ENCODE measurements at regions of chr2 and their contacts with region 1.

Region 1: GRCh38 chr2:177397481-177398289 is 5.1 kb downstream of the AGPS start:
- DNase-seq: peak; percentile 86
- ATAC-seq: peak; percentile 53
- H3K4me3 ChIP-seq: peak overlapping the region; percentile 54
- H3K27ac ChIP-seq: peak overlapping the region; percentile 99
- H3K4me1 ChIP-seq: peaks cover 61% of the 10 kb centered on the region
- H3K27me3 ChIP-seq: no peaks in the 10 kb centered on the region
- CTCF ChIP-seq: no peak

Region 2: GRCh38 chr2:177338177-177338721 is 59.4 kb before region 1 on chr2:
- CTCF ChIA-PET with region 1: interaction called, 10 read pairs
- POLR2A ChIA-PET with region 1: no interaction called
- intact Hi-C with region 1: loop called (anchors 1 kb)
- DNase-seq: peak; percentile 88
- ATAC-seq: peak; percentile 89
- H3K4me3 ChIP-seq: no peak overlapping the region; the same call in 1 of the 2 replicates
- H3K27ac ChIP-seq: peak overlapping the region; percentile 60
- H3K4me1 ChIP-seq: peaks cover 24% of the 10 kb centered on the region
- H3K27me3 ChIP-seq: no peaks in the 10 kb centered on the region
- CTCF ChIP-seq: no peak

Region 3: GRCh38 chr2:177355874-177356273 is 41.8 kb before region 1 on chr2:
- CTCF ChIA-PET with region 1: no interaction called
- POLR2A ChIA-PET with region 1: no interaction called
- intact Hi-C with region 1: loop called (anchors 2 kb)
- DNase-seq: no peak
- ATAC-seq: no peak
- H3K4me3 ChIP-seq: no peak overlapping the region
- H3K27ac ChIP-seq: no peak overlapping the region
- H3K4me1 ChIP-seq: no peaks in the 10 kb centered on the region
- H3K27me3 ChIP-seq: no peaks in the 10 kb centered on the region
- CTCF ChIP-seq: no peak

Measured in PC-3 (cell line).